PC-3 (cell line): ENCODE measurements at regions of chr19 and their contacts with region 1.

Region 1: DNA sequence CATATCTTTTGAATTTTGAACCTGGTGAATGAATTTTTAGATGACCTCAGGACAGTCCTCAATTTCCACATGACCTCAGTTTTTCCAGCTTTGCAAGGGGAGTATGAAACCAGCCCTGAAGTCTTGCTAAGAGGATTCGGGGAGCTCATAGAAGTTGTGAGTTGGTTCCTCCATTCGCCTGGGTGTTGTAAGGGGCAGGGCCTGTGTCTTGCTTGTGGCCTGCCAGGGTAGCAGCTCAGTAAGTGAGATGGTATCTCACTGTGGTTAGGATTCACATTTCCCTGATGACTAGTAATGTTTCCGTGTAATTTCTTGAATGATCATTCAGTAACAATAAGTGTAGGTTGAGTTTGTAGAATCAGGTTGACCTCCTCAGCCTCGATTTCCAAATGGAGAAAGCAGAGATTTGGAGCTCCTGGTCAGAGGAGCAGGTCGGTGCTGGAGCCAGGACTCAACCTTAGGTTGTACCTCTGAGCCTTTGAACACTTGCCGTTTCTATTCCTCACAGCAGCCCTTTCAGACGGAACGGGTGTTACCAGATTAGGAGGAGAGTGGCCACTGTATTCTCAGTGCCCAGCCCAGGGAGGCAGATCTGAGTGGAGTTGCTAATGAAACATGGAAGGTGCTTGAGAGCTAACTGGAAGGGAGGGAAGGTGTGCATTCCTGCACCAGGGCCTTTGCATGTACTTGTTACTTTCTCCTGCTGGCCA is 14.6 kb downstream of the NACC1 start:
- DNase-seq: peak; percentile 28
- ATAC-seq: no peak
- H3K4me3 ChIP-seq: no peak overlapping the region
- H3K27ac ChIP-seq: no peak overlapping the region
- H3K4me1 ChIP-seq: no peaks in the 10 kb centered on the region
- H3K27me3 ChIP-seq: no peaks in the 10 kb centered on the region
- CTCF ChIP-seq: no peak

Region 2: GRCh38 chr19:13255041-13255718 is 122.6 kb after region 1 on chr19:
- CTCF ChIA-PET with region 1: no interaction called
- POLR2A ChIA-PET with region 1: interaction called, 18 read pairs
- intact Hi-C with region 1: no loop called
- DNase-seq: no peak
- ATAC-seq: peak; percentile 22; the same call in 1 of the 2 replicates
- H3K4me3 ChIP-seq: no peak overlapping the region
- H3K27ac ChIP-seq: no peak overlapping the region
- H3K4me1 ChIP-seq: no peaks in the 10 kb centered on the region
- H3K27me3 ChIP-seq: no peaks in the 10 kb centered on the region
- CTCF ChIP-seq: no peak